ENCODE measurements at regions of chr10 and their contacts with region 1.

Region 1: GRCh38 chr10:102611514-102612087 is 32.7 kb upstream of the TRIM8 start:
- DNase-seq: peak in 1 of 5 donors; percentile 20
- H3K4me3 ChIP-seq: no peak overlapping the region
- H3K4me3 Mint-ChIP-seq: peak overlapping the region in 6 of 8 donors; percentile 30 to 72 (median 42)
- H3K27ac ChIP-seq: peak overlapping the region; percentile 27
- H3K27ac Mint-ChIP-seq: peak overlapping the region; percentile 94 to 99 (median 99)
- H3K4me1 ChIP-seq: peaks cover 44% of the 10 kb centered on the region
- H3K4me1 Mint-ChIP-seq: peaks cover 27 to 54% (median 36%) of the 10 kb centered on the region in 4 donors
- H3K27me3 ChIP-seq: no peaks in the 10 kb centered on the region
- H3K27me3 Mint-ChIP-seq: no peaks in the 10 kb centered on the region

Region 2: DNA sequence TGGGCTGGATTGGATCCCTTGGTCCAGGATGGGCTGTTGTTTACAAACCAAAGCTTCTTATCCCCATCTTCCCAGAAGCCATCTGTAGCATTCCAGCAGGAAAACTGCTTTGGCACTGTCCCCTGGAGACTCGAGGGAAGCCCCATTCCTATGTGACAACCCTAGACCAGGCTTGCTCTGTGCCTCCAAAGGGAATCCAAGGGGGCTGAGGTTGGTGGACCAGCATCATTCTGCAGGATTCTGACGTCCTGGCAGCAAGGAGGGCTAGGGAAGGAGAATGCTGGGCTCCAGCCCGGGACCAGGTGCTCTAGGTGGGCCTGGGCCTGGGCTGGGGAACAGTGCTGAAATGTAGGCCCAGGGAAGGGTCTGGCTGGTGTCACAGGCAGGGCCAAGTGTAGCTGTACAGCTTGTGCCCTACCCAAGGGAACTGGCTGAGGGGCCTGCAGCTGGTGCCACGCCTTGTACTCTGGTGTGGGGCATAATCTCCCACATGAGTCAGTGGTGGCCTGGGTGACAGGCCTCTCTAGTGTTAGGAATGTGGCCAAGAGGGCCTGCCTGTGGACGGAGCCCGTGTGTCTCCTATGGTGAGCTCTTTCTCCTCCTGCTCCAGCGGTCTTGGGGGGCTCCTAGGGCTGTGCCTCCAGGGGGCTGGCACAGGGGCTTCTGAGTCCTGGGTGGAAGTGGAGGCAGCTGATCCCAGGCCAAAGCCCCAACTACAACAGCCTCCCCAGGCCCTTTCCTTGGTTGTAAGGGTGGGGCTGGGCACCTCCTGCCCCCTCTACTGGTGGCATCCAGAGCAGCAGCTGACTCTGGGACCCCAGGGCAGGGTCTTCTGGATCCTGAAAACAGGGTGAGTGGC is 57.8 kb after region 1 on chr10:
- CTCF ChIA-PET with region 1: interaction called, 10 read pairs
- POLR2A ChIA-PET with region 1: interaction called, 3 read pairs
- intact Hi-C with region 1: loop called (anchors 1 kb)
- DNase-seq: no peak
- H3K4me3 ChIP-seq: no peak overlapping the region
- H3K4me3 Mint-ChIP-seq: no peak overlapping the region
- H3K27ac ChIP-seq: no peak overlapping the region
- H3K27ac Mint-ChIP-seq: peak overlapping the region in 5 of 7 donors; percentile 36 to 83 (median 42)
- H3K4me1 ChIP-seq: peaks cover 49% of the 10 kb centered on the region
- H3K4me1 Mint-ChIP-seq: peaks cover 23 to 49% (median 29%) of the 10 kb centered on the region in 4 donors
- H3K27me3 ChIP-seq: no peaks in the 10 kb centered on the region
- H3K27me3 Mint-ChIP-seq: no peaks in the 10 kb centered on the region

Region 3: DNA sequence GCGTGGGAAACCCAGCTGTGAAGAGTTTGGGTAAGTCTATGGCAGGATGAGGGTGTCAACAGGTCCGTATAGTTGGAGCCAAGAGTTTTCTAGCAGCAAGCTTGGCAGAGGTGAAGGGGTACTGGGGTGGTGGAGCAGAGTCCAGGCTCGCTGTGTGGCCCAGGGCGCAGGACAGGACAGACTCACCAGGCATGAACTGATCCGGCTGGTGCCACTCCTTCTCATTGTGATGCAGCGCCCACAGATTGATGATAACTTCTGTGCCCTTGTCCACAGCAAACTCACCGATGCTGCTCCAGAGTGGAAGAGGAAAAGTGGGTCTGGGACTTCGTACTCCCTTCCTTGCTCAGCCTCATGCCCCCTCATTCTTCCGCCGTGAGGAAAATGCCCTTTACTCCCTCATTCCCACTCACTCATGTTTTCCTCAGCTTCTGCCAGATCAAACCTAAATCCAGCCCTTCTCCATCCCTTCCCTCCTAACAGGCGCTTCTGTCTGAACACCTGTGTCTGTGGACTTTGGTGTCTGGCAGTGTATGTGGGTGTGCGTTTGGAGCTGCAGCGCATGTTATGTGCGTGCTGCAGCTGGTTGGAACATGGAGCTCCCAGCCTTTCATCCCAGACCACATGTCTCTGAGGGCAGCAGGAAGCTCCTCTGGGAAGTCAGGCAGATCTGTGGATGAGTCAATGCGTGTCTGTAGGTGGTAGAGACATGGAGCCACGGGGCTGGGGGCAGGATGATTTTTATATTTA is 219.9 kb after region 1 on chr10:
- CTCF ChIA-PET with region 1: no interaction called
- POLR2A ChIA-PET with region 1: no interaction called
- intact Hi-C with region 1: no loop called
- DNase-seq: no peak
- H3K4me3 ChIP-seq: no peak overlapping the region
- H3K4me3 Mint-ChIP-seq: no peak overlapping the region
- H3K27ac ChIP-seq: no peak overlapping the region
- H3K27ac Mint-ChIP-seq: no peak overlapping the region
- H3K4me1 ChIP-seq: no peaks in the 10 kb centered on the region
- H3K4me1 Mint-ChIP-seq: peaks cover 0 to 3% (median 0%) of the 10 kb centered on the region in 4 donors
- H3K27me3 ChIP-seq: no peaks in the 10 kb centered on the region
- H3K27me3 Mint-ChIP-seq: peaks cover 0 to 7% of the 10 kb centered on the region in 2 donors

Region 4: GRCh38 chr10:102904346-102904745 is 292.7 kb after region 1 on chr10:
- CTCF ChIA-PET with region 1: no interaction called
- POLR2A ChIA-PET with region 1: no interaction called
- intact Hi-C with region 1: no loop called
- DNase-seq: no peak
- H3K4me3 ChIP-seq: no peak overlapping the region
- H3K4me3 Mint-ChIP-seq: no peak overlapping the region
- H3K27ac ChIP-seq: no peak overlapping the region
- H3K27ac Mint-ChIP-seq: no peak overlapping the region
- H3K4me1 ChIP-seq: no peaks in the 10 kb centered on the region
- H3K4me1 Mint-ChIP-seq: no peaks in the 10 kb centered on the region
- H3K27me3 ChIP-seq: no peaks in the 10 kb centered on the region
- H3K27me3 Mint-ChIP-seq: no peaks in the 10 kb centered on the region

Region 5: GRCh38 chr10:103013416-103013815 is 401.8 kb after region 1 on chr10:
- CTCF ChIA-PET with region 1: no interaction called
- POLR2A ChIA-PET with region 1: no interaction called
- intact Hi-C with region 1: no loop called
- DNase-seq: no peak
- H3K4me3 ChIP-seq: no peak overlapping the region
- H3K4me3 Mint-ChIP-seq: no peak overlapping the region
- H3K27ac ChIP-seq: no peak overlapping the region
- H3K27ac Mint-ChIP-seq: no peak overlapping the region
- H3K4me1 ChIP-seq: no peaks in the 10 kb centered on the region
- H3K4me1 Mint-ChIP-seq: peaks cover 0 to 5% (median 2%) of the 10 kb centered on the region in 4 donors
- H3K27me3 ChIP-seq: no peaks in the 10 kb centered on the region
- H3K27me3 Mint-ChIP-seq: no peaks in the 10 kb centered on the region

Measured in CD4-positive, alpha-beta memory T cell (primary cell).